ENCODE measurements at regions of chr17 and their contacts with region 1.

Region 1: GRCh38 chr17:40647624-40648383 is at the start of gene SMARCE1:
- DNase-seq: peak; percentile 52 to 60
- H3K4me3 ChIP-seq: peak within 1 kb of the TSS; percentile 89
- H3K27ac ChIP-seq: peak within 1 kb of the TSS; percentile 89
- H3K4me1 ChIP-seq: peaks cover 21% of the 10 kb centered on the region
- H3K27me3 ChIP-seq: no peaks in the 10 kb centered on the region
- CTCF ChIP-seq: no peak
- total RNA-seq, gene SMARCE1: 75.0 and 90.8 TPM in 2 replicates

Region 2: GRCh38 chr17:40664582-40665333 is 17.0 kb after region 1 on chr17 and contains the start of gene KRT222:
- CTCF ChIA-PET with region 1: no interaction called
- POLR2A ChIA-PET with region 1: no interaction called
- intact Hi-C with region 1: no loop called
- DNase-seq: no peak
- H3K4me3 ChIP-seq: no peak within 1 kb of the TSS
- H3K27ac ChIP-seq: no peak within 1 kb of the TSS
- H3K4me1 ChIP-seq: no peaks in the 10 kb centered on the region
- H3K27me3 ChIP-seq: no peaks in the 10 kb centered on the region
- CTCF ChIP-seq: no peak
- total RNA-seq, gene KRT222: not detected in 2 replicates

Region 3: DNA sequence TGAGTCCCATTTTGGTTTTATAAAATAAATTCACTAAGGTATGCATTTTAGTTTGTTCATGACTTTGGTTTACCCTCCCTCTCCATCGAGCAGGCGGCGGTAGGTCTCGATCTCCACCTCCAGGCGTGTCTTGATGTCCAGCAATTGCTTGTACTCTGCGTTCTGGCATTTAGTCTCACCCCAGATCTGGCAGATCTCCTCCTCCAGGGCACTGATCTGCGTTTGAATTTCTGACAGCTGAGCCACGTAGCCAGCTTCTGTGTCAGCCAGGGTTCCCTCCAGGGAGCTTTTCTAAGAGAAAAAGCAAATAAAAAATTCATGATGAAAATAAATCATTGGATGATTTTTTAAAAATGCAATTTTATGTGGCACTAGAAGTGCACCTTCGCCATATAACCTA is 51.6 kb after region 1 on chr17:
- CTCF ChIA-PET with region 1: no interaction called
- POLR2A ChIA-PET with region 1: interaction called, 5 read pairs
- intact Hi-C with region 1: loop called (anchors 5 kb)
- DNase-seq: no peak
- H3K4me3 ChIP-seq: no peak overlapping the region
- H3K27ac ChIP-seq: no peak overlapping the region
- H3K4me1 ChIP-seq: peaks cover 45% of the 10 kb centered on the region
- H3K27me3 ChIP-seq: no peaks in the 10 kb centered on the region
- CTCF ChIP-seq: no peak

Region 4: GRCh38 chr17:40707720-40708119 is 59.9 kb after region 1 on chr17:
- CTCF ChIA-PET with region 1: no interaction called
- POLR2A ChIA-PET with region 1: interaction called, 6 read pairs
- intact Hi-C with region 1: loop called (anchors 5 kb)
- DNase-seq: peak; percentile 57 to 69
- H3K4me3 ChIP-seq: no peak overlapping the region
- H3K27ac ChIP-seq: peak overlapping the region; percentile 53
- H3K4me1 ChIP-seq: peaks cover 37% of the 10 kb centered on the region
- H3K27me3 ChIP-seq: no peaks in the 10 kb centered on the region
- CTCF ChIP-seq: no peak

Region 5: GRCh38 chr17:40753804-40754203 is 106.0 kb after region 1 on chr17:
- CTCF ChIA-PET with region 1: no interaction called
- POLR2A ChIA-PET with region 1: no interaction called
- intact Hi-C with region 1: no loop called
- DNase-seq: no peak
- H3K4me3 ChIP-seq: no peak overlapping the region
- H3K27ac ChIP-seq: no peak overlapping the region
- H3K4me1 ChIP-seq: no peaks in the 10 kb centered on the region
- H3K27me3 ChIP-seq: 0 out of 2 replicates have a peak, but pooled peaks cover 2% of the 10 kb centered on the region
- CTCF ChIP-seq: no peak

Region 6: GRCh38 chr17:41678907-41679739 is 1031.3 kb after region 1 on chr17:
- CTCF ChIA-PET with region 1: interaction called, 5 read pairs
- POLR2A ChIA-PET with region 1: interaction called, 11 read pairs
- intact Hi-C with region 1: no loop called
- DNase-seq: peak; percentile 67 to 88
- H3K4me3 ChIP-seq: peak overlapping the region; percentile 50
- H3K27ac ChIP-seq: peak overlapping the region; percentile 94
- H3K4me1 ChIP-seq: peaks cover 24% of the 10 kb centered on the region
- H3K27me3 ChIP-seq: no peaks in the 10 kb centered on the region
- CTCF ChIP-seq: peak; percentile 28; the same call in 1 of the 2 replicates